ENCODE measurements at regions of chr2 and their contacts with region 1.

Region 1: DNA sequence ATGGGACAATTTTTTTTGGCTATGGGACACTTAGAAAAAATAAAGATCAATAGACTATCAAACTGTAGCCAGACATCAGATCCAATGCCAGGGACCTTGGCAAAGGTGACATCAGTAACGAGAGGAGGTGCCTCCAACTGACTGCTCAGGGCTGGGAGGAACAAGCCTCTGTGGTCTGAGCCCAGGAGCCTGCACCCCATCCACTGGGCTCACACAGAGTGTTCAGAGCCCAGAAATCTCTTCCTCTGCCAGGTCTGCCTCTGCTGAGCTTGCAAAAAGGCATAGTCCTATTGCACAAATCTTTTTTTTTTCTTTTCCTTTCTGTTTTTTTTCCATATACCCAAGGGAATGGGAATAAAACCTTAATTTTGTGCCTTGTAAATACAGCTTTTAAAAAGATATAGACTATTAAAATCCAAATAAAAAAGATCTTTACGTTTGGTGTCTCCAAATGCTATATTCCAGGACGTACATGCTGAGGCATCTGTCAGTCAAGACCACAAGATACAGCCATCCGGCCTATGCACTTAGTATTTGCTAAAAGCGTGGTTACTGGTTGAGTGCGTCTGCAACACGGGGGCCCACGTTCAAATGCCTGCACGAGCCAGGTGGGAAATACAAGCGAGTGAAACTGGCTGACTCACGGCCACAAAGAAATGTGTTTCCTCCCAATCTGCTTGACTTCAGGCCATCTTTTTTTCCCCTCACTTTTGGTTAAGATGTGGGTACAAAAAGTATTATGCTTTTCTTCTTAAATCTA is 7.8 kb upstream of the ARHGAP25 start:
- DNase-seq: peak; percentile 91
- ATAC-seq: peak; percentile 96
- H3K4me3 ChIP-seq: peak overlapping the region in 1 of 5 experiments; percentile 4
- H3K4me3 Mint-ChIP-seq: peak overlapping the region; percentile 49
- H3K27ac ChIP-seq: peak overlapping the region in 1 of 2 donors; percentile 52
- H3K27ac Mint-ChIP-seq: peak overlapping the region; percentile 82
- H3K4me1 ChIP-seq: peaks cover 32 to 54% of the 10 kb centered on the region in 2 donors
- H3K4me1 Mint-ChIP-seq: peaks cover 61% of the 10 kb centered on the region
- H3K27me3 ChIP-seq: no peaks in the 10 kb centered on the region
- H3K27me3 Mint-ChIP-seq: no peaks in the 10 kb centered on the region
- CTCF ChIP-seq: no peak

Region 2: GRCh38 chr2:68282811-68283418 is 443.9 kb before region 1 on chr2:
- CTCF ChIA-PET with region 1: no interaction called
- POLR2A ChIA-PET with region 1: no interaction called
- intact Hi-C with region 1: no loop called
- DNase-seq: peak; percentile 57
- ATAC-seq: peak; percentile 53
- H3K4me3 ChIP-seq: no peak overlapping the region
- H3K4me3 Mint-ChIP-seq: no peak overlapping the region
- H3K27ac ChIP-seq: no peak overlapping the region
- H3K27ac Mint-ChIP-seq: no peak overlapping the region
- H3K4me1 ChIP-seq: peaks cover 0 to 3% of the 10 kb centered on the region in 2 donors
- H3K4me1 Mint-ChIP-seq: peaks cover 4% of the 10 kb centered on the region
- H3K27me3 ChIP-seq: no peaks in the 10 kb centered on the region
- H3K27me3 Mint-ChIP-seq: no peaks in the 10 kb centered on the region
- CTCF ChIP-seq: peak; percentile 88

Region 3: DNA sequence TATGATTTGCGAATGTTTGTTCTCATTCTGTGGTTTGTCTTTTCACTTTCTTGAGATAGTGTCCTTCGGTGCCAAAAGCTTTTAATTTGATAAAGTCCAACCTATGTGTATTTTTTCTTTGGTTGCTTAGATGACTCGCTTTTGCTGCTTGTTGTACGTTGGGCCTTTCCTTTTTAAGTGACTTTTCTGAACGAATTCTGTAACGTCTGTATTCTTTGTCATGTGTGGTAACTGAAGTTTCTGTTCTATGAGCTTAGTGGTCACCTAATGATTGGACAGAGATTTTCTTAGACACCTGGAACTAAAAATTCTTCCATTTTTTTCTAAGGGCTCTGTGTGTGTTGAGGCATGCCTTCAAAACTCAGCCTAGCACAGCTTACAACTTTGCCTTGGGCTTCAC is 103.0 kb before region 1 on chr2:
- CTCF ChIA-PET with region 1: no interaction called
- POLR2A ChIA-PET with region 1: no interaction called
- intact Hi-C with region 1: no loop called
- DNase-seq: no peak
- ATAC-seq: no peak
- H3K4me3 ChIP-seq: no peak overlapping the region
- H3K4me3 Mint-ChIP-seq: no peak overlapping the region
- H3K27ac ChIP-seq: no peak overlapping the region
- H3K27ac Mint-ChIP-seq: no peak overlapping the region
- H3K4me1 ChIP-seq: no peaks in the 10 kb centered on the region
- H3K4me1 Mint-ChIP-seq: no peaks in the 10 kb centered on the region
- H3K27me3 ChIP-seq: no peaks in the 10 kb centered on the region
- H3K27me3 Mint-ChIP-seq: no peaks in the 10 kb centered on the region
- CTCF ChIP-seq: no peak

Region 4: GRCh38 chr2:68689553-68690537 is 36.9 kb before region 1 on chr2:
- CTCF ChIA-PET with region 1: interaction called, 3 read pairs
- POLR2A ChIA-PET with region 1: no interaction called
- intact Hi-C with region 1: loop called (anchors 5 kb)
- DNase-seq: peak; percentile 80
- ATAC-seq: peak; percentile 81
- H3K4me3 ChIP-seq: peak overlapping the region in 4 of 5 experiments; percentile 8 to 50 (median 22)
- H3K4me3 Mint-ChIP-seq: peak overlapping the region; percentile 65
- H3K27ac ChIP-seq: peak overlapping the region; percentile 39 to 62
- H3K27ac Mint-ChIP-seq: peak overlapping the region; percentile 84
- H3K4me1 ChIP-seq: peaks cover 35 to 36% of the 10 kb centered on the region in 2 donors
- H3K4me1 Mint-ChIP-seq: peaks cover 40% of the 10 kb centered on the region
- H3K27me3 ChIP-seq: no peaks in the 10 kb centered on the region
- H3K27me3 Mint-ChIP-seq: no peaks in the 10 kb centered on the region
- CTCF ChIP-seq: no peak

Region 5: DNA sequence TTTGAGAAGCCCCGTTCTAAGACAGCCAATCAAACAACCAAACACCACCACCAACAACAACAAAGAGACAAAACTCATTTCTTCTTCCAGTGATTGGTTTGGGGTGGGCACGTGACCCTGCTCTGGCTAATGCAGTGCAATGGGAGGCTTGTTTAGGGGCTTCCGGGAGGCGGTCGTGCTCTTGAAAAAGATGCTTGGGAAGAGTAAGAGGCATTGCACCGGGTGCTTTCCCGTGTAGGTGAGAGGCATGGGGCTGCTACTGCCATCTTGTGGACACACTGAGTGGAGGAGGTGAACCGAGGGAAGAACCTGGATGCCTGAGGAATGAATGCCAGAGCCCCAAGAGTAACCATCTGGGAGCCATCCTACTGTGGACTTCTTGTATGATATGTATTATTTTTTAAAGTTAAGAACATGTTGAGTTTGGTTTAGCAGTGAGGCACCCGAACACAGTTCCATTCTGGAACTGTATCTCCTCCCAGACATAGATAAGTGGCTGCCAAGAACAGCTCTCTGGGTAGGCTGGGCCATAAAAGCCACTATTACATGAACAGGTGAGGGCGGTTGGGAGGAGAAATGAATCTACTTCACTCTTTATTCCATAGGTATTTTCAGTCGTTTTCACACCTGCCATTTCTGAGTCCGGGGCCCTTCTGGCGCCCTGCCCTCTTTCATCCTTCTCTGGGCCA is 11.3 kb before region 1 on chr2:
- CTCF ChIA-PET with region 1: interaction called, 68 read pairs
- POLR2A ChIA-PET with region 1: interaction called, 4 read pairs
- intact Hi-C with region 1: loop called (anchors 1 kb)
- DNase-seq: peak; percentile 70
- ATAC-seq: peak; percentile 37
- H3K4me3 ChIP-seq: peak overlapping the region in 1 of 5 experiments; percentile 17
- H3K4me3 Mint-ChIP-seq: peak overlapping the region; percentile 33
- H3K27ac ChIP-seq: peak overlapping the region; percentile 59 to 78
- H3K27ac Mint-ChIP-seq: peak overlapping the region; percentile 83
- H3K4me1 ChIP-seq: peaks cover 45 to 50% of the 10 kb centered on the region in 2 donors
- H3K4me1 Mint-ChIP-seq: peaks cover 69% of the 10 kb centered on the region
- H3K27me3 ChIP-seq: no peaks in the 10 kb centered on the region
- H3K27me3 Mint-ChIP-seq: no peaks in the 10 kb centered on the region
- CTCF ChIP-seq: peak; percentile 57

Measured in B cell (primary cell).